Sciatic nerve (tissue), 2 donors: ENCODE measurements at regions of chr12 and their contacts with region 1.

Region 1: DNA sequence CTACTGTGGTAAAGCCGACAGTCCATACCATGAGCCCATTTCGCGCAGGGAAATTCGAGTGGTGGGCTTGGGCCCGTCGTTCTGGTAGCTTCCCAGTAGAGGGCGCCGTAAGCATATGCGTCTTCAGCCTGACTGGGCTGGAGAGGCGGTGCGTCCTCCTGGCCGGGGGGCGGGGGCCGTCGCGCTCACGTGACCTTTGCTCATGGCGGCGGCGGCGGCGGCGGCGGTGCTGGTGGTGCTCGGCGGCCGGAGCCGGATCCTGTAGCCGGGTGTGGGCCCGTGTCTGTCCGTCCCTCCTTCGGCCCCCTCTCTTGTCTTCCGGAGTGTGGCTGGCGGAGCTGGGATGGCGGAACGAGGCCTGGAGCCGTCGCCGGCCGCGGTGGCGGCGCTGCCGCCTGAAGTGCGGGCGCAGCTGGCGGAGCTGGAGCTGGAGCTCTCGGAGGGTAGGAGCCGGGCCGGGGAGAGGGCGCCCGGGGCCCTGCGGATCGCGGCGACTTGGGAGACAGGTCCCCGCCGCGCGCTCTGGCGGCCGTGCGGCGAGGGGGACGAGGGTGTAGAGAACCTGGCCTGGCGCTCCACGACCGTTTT is at the start of gene DIP2B:
- DNase-seq: peak; percentile 98
- ATAC-seq: peak; percentile 96
- total RNA-seq, gene DIP2B: 47.4 TPM

Region 2: GRCh38 chr12:50637870-50638481 is 133.1 kb after region 1 on chr12:
- intact Hi-C with region 1: loop called (anchors 2 kb)
- DNase-seq: no peak
- ATAC-seq: peak; percentile 63

Region 3: DNA sequence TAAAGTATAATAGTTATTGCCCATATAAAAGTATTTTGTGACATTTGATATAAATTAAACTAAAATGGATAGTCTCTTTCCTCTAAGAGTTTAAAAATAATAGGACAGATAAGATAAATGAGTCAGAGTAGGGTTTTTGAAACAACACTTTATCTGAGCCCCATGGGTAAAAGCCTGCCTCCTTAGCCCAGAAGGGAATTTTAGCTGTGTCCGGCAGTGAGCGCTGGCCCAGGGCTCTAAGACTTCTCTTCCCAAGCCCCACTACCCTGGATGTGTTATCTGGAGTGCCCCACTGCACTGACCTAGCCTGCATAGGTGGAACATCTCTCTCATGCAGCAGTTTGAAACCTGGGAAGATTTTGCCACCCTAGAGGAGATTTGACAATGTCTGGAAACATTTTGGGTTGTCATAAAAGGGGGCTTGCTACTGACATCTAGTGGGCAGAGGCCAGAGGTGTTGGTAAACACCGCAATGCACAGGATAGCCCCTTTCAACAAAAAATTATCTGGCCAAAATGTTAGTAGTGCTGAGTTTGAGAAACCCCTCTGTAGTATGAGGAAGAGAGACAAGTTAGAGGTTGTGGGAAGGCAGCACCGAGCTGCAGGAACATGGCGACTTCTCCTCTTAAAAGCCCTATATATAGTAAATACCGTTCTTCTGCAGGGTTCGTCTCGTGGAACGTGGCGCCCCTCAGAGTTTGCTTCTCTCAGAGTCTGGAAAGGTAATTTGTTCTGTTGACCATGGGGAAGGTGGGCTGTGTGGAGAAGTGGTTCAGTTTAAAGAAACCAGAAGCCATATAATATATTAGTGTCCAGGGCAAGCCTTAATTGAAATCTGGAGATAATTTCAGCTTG is 229.7 kb after region 1 on chr12:
- intact Hi-C with region 1: loop called (anchors 5 kb)
- DNase-seq: no peak
- ATAC-seq: no peak